ENCODE measurements at regions of chr18 and their contacts with region 1.

Region 1: GRCh38 chr18:62186774-62187542 is at the starts of genes PIGN and RELCH:
- DNase-seq: peak; percentile 87
- H3K4me3 ChIP-seq: peak within 1 kb of the TSS; percentile 82
- H3K27me3 ChIP-seq: no peaks in the 10 kb centered on the region
- CTCF ChIP-seq: no peak
- polyA plus RNA-seq, gene PIGN: 12.0 and 31.5 TPM in 2 replicates
- polyA plus RNA-seq, gene RELCH: 8.2 and 14.9 TPM in 2 replicates

Region 2: DNA sequence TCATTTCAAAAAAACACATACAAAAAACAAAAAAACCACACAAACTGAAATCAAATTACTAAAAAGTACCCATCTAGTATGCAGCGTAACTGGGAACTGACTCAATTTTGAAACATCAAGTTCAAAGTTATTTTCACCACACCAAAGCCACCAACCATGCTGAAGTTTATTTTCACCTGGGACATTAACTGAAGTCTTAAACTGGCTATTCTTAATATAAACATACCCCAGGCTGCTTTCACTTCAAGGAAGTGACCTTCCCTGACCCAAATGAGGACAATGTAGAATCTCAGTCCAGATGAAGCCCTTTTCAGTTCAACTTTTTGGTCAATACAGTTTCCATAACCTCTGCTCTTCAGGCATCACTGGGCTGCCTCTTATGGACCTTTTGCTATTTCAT is 84.7 kb before region 1 on chr18:
- CTCF ChIA-PET with region 1: no interaction called
- POLR2A ChIA-PET with region 1: no interaction called
- DNase-seq: no peak
- H3K4me3 ChIP-seq: no peak overlapping the region
- H3K27me3 ChIP-seq: no peaks in the 10 kb centered on the region
- CTCF ChIP-seq: no peak

Region 3: DNA sequence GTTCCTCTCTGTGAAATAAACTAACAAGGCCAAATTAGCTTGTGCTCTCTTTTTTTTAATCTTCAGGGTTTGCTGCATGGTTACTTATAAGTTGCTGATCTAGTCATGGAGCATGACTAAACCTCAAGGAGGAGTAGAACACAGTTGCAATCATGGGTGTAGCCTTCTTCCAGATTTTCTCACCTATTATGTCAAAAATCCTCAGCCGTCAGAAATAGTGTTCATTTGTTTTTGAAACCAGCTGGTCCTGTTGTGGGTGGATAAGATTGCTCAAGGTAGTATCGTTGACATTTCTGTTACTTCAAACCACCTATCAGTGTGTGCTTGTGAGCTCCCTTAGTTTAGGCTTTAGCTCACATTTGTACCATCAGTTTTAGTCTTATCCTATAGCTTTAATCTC is 11.3 kb after region 1 on chr18:
- CTCF ChIA-PET with region 1: interaction called, 3 read pairs
- POLR2A ChIA-PET with region 1: interaction called, 11 read pairs
- DNase-seq: no peak
- H3K4me3 ChIP-seq: no peak overlapping the region
- H3K27me3 ChIP-seq: no peaks in the 10 kb centered on the region
- CTCF ChIP-seq: no peak

Region 4: DNA sequence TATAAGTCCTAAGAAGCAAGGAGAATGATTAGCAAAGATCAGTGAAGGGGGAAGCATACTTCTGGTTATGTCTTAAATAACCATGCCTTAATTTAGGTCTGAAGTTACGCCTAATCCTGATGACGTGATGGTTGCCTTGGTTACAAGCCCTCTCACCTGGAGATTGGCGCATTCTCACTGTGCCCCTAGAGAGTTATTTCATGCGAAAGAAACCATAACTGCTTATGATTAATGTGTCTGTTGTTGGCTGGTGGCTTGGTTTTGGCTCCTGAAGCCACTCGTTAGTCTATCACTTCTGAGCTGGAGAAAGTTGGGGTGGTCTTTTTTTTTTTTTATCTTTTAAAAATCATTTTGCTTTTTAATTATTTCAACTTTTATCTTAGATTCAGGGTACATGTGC is 185.2 kb after region 1 on chr18:
- CTCF ChIA-PET with region 1: no interaction called
- POLR2A ChIA-PET with region 1: no interaction called
- DNase-seq: no peak
- H3K4me3 ChIP-seq: no peak overlapping the region
- H3K27me3 ChIP-seq: peaks cover 2% of the 10 kb centered on the region
- CTCF ChIP-seq: no peak